Right cardiac atrium (tissue), 5 donors: ENCODE measurements at regions of chr3 and their contacts with region 1.

Region 1: GRCh38 chr3:153768561-153769469 is 352.4 kb upstream of the ARHGEF26 start:
- DNase-seq: no peak
- ATAC-seq: peak; percentile 81 to 83
- H3K4me3 ChIP-seq: no peak overlapping the region
- H3K27ac ChIP-seq: no peak overlapping the region
- H3K4me1 ChIP-seq: no peaks in the 10 kb centered on the region
- H3K27me3 ChIP-seq: no peaks in the 10 kb centered on the region

Region 2: GRCh38 chr3:153026026-153026425 is 742.8 kb before region 1 on chr3:
- intact Hi-C with region 1: loop called in 2 of 4 experiments (anchors 5 to 10 kb)
- DNase-seq: no peak
- ATAC-seq: no peak
- H3K4me3 ChIP-seq: no peak overlapping the region
- H3K27ac ChIP-seq: no peak overlapping the region
- H3K4me1 ChIP-seq: no peaks in the 10 kb centered on the region
- H3K27me3 ChIP-seq: no peaks in the 10 kb centered on the region

Region 3: GRCh38 chr3:153043729-153044328 is 725.0 kb before region 1 on chr3:
- intact Hi-C with region 1: loop called in 3 of 4 experiments (anchors 5 to 10 kb)
- DNase-seq: no peak
- ATAC-seq: peak; percentile 52 to 64
- H3K4me3 ChIP-seq: no peak overlapping the region
- H3K27ac ChIP-seq: no peak overlapping the region
- H3K4me1 ChIP-seq: no peaks in the 10 kb centered on the region
- H3K27me3 ChIP-seq: no peaks in the 10 kb centered on the region

Region 4: GRCh38 chr3:153161138-153161713 is 607.6 kb before region 1 on chr3:
- intact Hi-C with region 1: loop called in 1 of 4 experiments (anchors 10 kb)
- DNase-seq: peak; percentile 94 to 97 (median 96)
- ATAC-seq: peak; percentile 95 to 96
- H3K4me3 ChIP-seq: peak overlapping the region; percentile 84
- H3K27ac ChIP-seq: peak overlapping the region; percentile 90
- H3K4me1 ChIP-seq: no peaks in the 10 kb centered on the region
- H3K27me3 ChIP-seq: no peaks in the 10 kb centered on the region

Region 5: DNA sequence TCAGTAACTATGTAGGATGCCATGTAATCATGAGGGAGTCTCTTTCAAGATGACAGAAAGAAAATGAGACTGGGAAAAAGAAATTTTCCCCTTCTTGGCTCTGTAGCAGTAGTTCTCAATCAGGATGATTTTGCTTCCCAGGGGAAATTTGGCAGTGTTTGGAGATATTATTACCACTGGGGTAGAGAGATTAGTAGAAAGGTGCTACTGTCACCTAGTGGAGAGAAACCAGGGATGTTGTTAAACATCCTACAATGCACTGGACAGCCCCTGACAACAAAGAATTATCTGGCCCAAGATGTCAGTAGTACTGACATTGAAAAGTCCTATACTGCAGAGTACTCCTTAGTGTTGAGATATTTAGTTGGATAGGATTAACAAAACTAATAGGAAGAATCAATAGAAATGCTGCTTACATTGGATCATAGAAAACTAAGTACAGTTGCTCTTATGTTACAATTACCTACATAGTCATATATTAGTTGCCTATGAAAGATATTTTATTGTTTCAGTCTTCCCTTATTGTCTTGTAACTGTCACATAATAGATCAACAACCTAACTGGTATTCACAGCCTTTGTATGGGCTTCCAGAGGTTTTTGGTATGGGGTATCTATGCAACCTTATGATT is 173.5 kb before region 1 on chr3:
- intact Hi-C with region 1: loop called in 1 of 4 experiments (anchors 10 kb)
- DNase-seq: no peak
- ATAC-seq: peak; percentile 26 to 64
- H3K4me3 ChIP-seq: no peak overlapping the region
- H3K27ac ChIP-seq: no peak overlapping the region
- H3K4me1 ChIP-seq: peaks cover 5% of the 10 kb centered on the region
- H3K27me3 ChIP-seq: no peaks in the 10 kb centered on the region

Region 6: GRCh38 chr3:153927107-153927506 is 158.3 kb after region 1 on chr3:
- intact Hi-C with region 1: no loop called
- DNase-seq: no peak
- ATAC-seq: no peak
- H3K4me3 ChIP-seq: no peak overlapping the region
- H3K27ac ChIP-seq: no peak overlapping the region
- H3K4me1 ChIP-seq: no peaks in the 10 kb centered on the region
- H3K27me3 ChIP-seq: no peaks in the 10 kb centered on the region